HepG2 (cell line): ENCODE measurements at regions of chr5 and their contacts with region 1.

Region 1: GRCh38 chr5:168579488-168580226 is 489 bp upstream of the PANK3 start:
- DNase-seq: peak; percentile 98
- ATAC-seq: peak; percentile 98
- H3K4me3 ChIP-seq: peak overlapping the region; percentile 84 to 96 (median 88)
- H3K27ac ChIP-seq: peak overlapping the region; percentile 96
- H3K4me1 ChIP-seq: peaks cover 55% of the 10 kb centered on the region
- H3K27me3 ChIP-seq: no peaks in the 10 kb centered on the region; a peak in 1 of 5 replicates
- CTCF ChIP-seq: no peak
- EP300 ChIP-seq: peak in 1 of 2 experiments; percentile 72; a peak in 3 of 4 replicates
- POLR2A ChIP-seq: peak; percentile 98
- RAD21 ChIP-seq: no peak

Region 2: GRCh38 chr5:167743685-167744464 is 835.8 kb before region 1 on chr5:
- CTCF ChIA-PET with region 1: no interaction called
- POLR2A ChIA-PET with region 1: no interaction called
- in situ Hi-C with region 1: no loop called
- intact Hi-C with region 1: no loop called
- DNase-seq: no peak
- ATAC-seq: no peak
- H3K4me3 ChIP-seq: no peak overlapping the region
- H3K27ac ChIP-seq: no peak overlapping the region
- H3K4me1 ChIP-seq: no peaks in the 10 kb centered on the region
- H3K27me3 ChIP-seq: no peaks in the 10 kb centered on the region
- CTCF ChIP-seq: no peak
- EP300 ChIP-seq: no peak
- POLR2A ChIP-seq: no peak
- RAD21 ChIP-seq: no peak

Region 3: GRCh38 chr5:168486136-168486879 is 93.3 kb before region 1 on chr5 and contains the start of gene RARS1:
- CTCF ChIA-PET with region 1: no interaction called
- POLR2A ChIA-PET with region 1: no interaction called
- in situ Hi-C with region 1: no loop called
- intact Hi-C with region 1: loop called (anchors 10 kb)
- DNase-seq: peak; percentile 88
- ATAC-seq: peak; percentile 97
- H3K4me3 ChIP-seq: peak within 1 kb of the TSS; percentile 91 to 97 (median 95)
- H3K27ac ChIP-seq: peak within 1 kb of the TSS; percentile 36
- H3K4me1 ChIP-seq: peaks cover 35% of the 10 kb centered on the region
- H3K27me3 ChIP-seq: no peaks in the 10 kb centered on the region; a peak in 1 of 5 replicates
- CTCF ChIP-seq: peak; percentile 99
- EP300 ChIP-seq: no peak
- POLR2A ChIP-seq: peak; percentile 95 to 99
- RAD21 ChIP-seq: peak; percentile 81
- total RNA-seq, gene RARS1: 170 and 234 TPM in 2 replicates

Region 4: DNA sequence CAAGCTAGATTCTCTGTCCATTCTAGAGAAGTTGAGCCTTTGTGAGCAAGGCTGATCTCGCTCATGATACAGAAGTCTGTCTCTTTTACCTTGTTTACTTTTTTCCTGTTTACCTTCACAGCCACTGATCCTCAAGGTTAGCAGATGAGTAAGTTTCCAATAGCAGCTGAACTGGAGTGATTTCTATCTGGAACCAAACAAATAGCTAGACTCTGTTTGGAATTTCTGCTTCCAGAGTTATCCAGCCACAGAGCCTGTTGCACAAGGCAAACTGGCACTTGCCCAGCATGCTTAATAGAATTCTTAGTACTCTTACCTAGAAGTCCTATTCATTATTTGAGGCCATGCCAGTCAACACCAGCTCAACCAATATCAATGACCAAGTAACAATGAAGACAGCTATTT is 12.4 kb after region 1 on chr5:
- CTCF ChIA-PET with region 1: no interaction called
- POLR2A ChIA-PET with region 1: interaction called, 91 read pairs
- in situ Hi-C with region 1: no loop called
- intact Hi-C with region 1: loop called (anchors 2 kb)
- DNase-seq: peak; percentile 98
- ATAC-seq: peak; percentile 94
- H3K4me3 ChIP-seq: peak overlapping the region; percentile 26 to 54 (median 30); a peak in 3 of 6 replicates
- H3K27ac ChIP-seq: peak overlapping the region; percentile 93
- H3K4me1 ChIP-seq: peaks cover 59% of the 10 kb centered on the region
- H3K27me3 ChIP-seq: no peaks in the 10 kb centered on the region
- CTCF ChIP-seq: no peak
- EP300 ChIP-seq: peak in 1 of 2 experiments; percentile 95; a peak in 2 of 4 replicates
- POLR2A ChIP-seq: no peak
- RAD21 ChIP-seq: no peak; the same call in 1 of the 2 replicates

Region 5: GRCh38 chr5:168624850-168625357 is 45.2 kb after region 1 on chr5:
- CTCF ChIA-PET with region 1: no interaction called
- POLR2A ChIA-PET with region 1: interaction called, 4 read pairs
- in situ Hi-C with region 1: no loop called
- intact Hi-C with region 1: loop called (anchors 2 kb)
- DNase-seq: peak; percentile 93
- ATAC-seq: peak; percentile 99
- H3K4me3 ChIP-seq: peak overlapping the region in 1 of 3 experiments; percentile 34; a peak in 1 of 6 replicates
- H3K27ac ChIP-seq: peak overlapping the region; percentile 76
- H3K4me1 ChIP-seq: peaks cover 57% of the 10 kb centered on the region
- H3K27me3 ChIP-seq: no peaks in the 10 kb centered on the region
- CTCF ChIP-seq: no peak
- EP300 ChIP-seq: peak; percentile 81 to 90
- POLR2A ChIP-seq: no peak
- RAD21 ChIP-seq: peak; percentile 13; the same call in 1 of the 2 replicates

Region 6: DNA sequence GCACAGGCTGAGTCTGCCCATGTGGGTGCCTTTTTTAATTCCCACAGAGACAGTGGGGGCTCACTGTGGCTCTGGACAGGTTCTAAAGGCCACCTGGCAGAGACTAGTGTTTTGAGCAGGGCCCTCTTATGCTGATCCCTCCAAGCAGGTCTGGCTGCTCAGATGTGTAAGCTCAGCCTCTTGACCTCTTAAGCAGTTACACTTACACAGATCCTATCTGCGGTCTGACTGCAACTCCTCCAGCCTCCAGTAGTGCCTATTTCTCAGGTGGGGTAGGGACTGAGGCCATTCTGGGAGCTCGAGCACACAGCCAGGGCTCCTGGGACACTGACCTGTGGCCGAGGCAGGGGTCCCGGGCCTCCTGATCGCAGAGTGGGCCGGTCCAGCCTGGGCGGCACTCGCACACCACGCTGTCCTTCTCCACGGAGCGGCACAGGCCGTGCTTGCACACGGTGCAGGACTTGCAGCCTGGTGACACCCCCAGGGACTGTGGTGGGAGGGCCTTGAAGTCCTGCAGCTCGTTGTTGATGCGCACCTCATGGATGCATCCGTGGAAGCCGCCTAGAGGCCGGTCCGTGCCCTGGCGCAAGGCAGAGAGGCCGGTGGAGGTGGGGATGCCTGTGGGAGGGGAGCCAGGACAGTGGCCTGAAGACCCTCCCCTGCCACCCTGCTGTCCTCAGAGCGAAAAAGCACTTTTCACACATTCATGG is 91.4 kb after region 1 on chr5:
- CTCF ChIA-PET with region 1: no interaction called
- POLR2A ChIA-PET with region 1: no interaction called
- in situ Hi-C with region 1: no loop called
- intact Hi-C with region 1: loop called (anchors 5 kb)
- DNase-seq: no peak
- ATAC-seq: peak; percentile 79
- H3K4me3 ChIP-seq: no peak overlapping the region
- H3K27ac ChIP-seq: no peak overlapping the region
- H3K4me1 ChIP-seq: no peaks in the 10 kb centered on the region
- H3K27me3 ChIP-seq: no peaks in the 10 kb centered on the region; a peak in 1 of 5 replicates
- CTCF ChIP-seq: peak; percentile 44
- EP300 ChIP-seq: no peak
- POLR2A ChIP-seq: no peak
- RAD21 ChIP-seq: no peak